ENCODE measurements at regions of chr1 and their contacts with region 1.

Region 1: GRCh38 chr1:165597883-165598675 is 33.0 kb upstream of the MGST3 start:
- DNase-seq: peak; percentile 99
- H3K4me3 Mint-ChIP-seq: peak overlapping the region; percentile 89
- H3K27ac Mint-ChIP-seq: peak overlapping the region; percentile 95
- H3K4me1 Mint-ChIP-seq: peaks cover 23% of the 10 kb centered on the region
- H3K27me3 Mint-ChIP-seq: peaks cover 27% of the 10 kb centered on the region
- CTCF ChIP-seq: no peak

Region 2: GRCh38 chr1:165144757-165145397 is 453.2 kb before region 1 on chr1:
- CTCF ChIA-PET with region 1: interaction called, 26 read pairs
- POLR2A ChIA-PET with region 1: no interaction called
- intact Hi-C with region 1: loop called (anchors 2 kb)
- DNase-seq: peak; percentile 81
- H3K4me3 Mint-ChIP-seq: no peak overlapping the region
- H3K27ac Mint-ChIP-seq: no peak overlapping the region
- H3K4me1 Mint-ChIP-seq: peaks cover 6% of the 10 kb centered on the region
- H3K27me3 Mint-ChIP-seq: peaks cover 52% of the 10 kb centered on the region
- CTCF ChIP-seq: peak; percentile 91

Region 3: GRCh38 chr1:165403835-165404482 is 194.1 kb before region 1 on chr1:
- CTCF ChIA-PET with region 1: interaction called, 557 read pairs
- POLR2A ChIA-PET with region 1: interaction called, 5 read pairs
- intact Hi-C with region 1: loop called (anchors 1 kb)
- DNase-seq: peak; percentile 65
- H3K4me3 Mint-ChIP-seq: no peak overlapping the region
- H3K27ac Mint-ChIP-seq: no peak overlapping the region
- H3K4me1 Mint-ChIP-seq: no peaks in the 10 kb centered on the region
- H3K27me3 Mint-ChIP-seq: peaks cover 13% of the 10 kb centered on the region
- CTCF ChIP-seq: peak; percentile 91

Region 4: DNA sequence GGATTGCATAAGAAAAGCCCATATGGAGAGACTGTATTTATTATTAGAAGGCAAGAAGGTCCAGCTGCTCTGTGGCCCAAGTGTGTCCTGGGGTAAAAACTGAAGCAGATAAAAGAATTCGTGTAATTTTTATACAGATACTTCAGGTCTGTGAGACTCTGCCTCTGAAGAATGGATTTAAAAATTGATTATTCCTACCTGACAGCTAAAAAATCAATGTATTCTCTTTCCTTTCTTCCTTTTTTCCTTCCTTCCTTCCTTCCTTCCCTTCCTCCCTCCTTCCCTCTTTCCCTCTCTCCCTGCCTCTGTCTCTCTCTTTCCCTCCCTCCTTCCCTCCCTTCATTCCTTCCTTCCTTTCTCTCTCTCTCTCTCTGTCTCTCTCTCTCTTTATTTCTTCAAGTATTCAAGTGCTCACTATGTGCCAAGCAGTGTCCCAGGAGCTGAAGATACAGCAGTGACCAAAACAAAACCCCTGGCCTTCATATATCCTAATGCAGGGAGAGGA is 21.6 kb after region 1 on chr1:
- CTCF ChIA-PET with region 1: interaction called, 21 read pairs
- POLR2A ChIA-PET with region 1: no interaction called
- intact Hi-C with region 1: no loop called
- DNase-seq: no peak
- H3K4me3 Mint-ChIP-seq: no peak overlapping the region
- H3K27ac Mint-ChIP-seq: no peak overlapping the region
- H3K4me1 Mint-ChIP-seq: no peaks in the 10 kb centered on the region
- H3K27me3 Mint-ChIP-seq: peaks cover 31% of the 10 kb centered on the region
- CTCF ChIP-seq: no peak

Region 5: DNA sequence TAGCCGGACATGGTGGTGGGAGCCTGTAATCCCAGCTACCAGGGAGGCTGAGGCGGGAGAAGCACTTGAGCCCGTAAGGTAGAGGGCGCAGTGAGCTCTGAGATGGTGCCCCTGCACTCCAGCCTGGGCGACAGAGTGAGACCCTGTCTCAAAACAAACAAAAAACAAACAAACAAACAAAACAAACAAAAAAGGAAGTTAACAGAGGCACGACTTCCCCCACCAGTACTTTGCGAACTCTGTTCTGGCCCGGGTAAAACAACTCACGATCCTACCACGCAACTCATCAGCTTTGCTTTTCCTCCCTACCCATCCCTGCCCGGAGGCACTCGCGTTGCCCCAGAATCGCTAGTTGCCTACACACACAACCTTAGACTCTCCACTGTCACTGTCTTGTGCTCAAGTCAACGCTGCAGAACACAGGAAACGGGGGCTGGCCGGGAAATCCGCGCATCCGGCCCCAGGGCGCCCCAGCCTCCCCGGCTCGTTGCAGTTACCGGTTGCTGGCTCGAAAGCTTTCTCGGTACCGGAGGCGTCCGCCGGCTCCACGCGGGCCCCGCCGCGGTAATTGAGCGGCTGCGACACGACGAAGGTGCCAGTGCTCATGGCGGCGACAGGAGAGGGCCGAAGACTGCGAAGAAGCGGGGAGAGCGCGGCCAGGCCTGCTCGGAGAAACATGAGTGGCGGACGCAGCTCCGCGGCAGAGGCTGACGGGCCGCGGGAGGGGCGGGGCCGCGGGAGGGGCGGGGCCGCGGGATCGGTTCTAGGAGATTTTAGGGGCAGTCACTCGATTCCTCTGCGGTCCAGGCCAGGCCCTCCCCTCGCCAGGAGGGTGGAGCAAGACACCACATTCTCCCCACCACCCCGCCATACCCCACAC is 100.0 kb after region 1 on chr1 and contains the start of gene ALDH9A1:
- CTCF ChIA-PET with region 1: interaction called, 62 read pairs
- POLR2A ChIA-PET with region 1: interaction called, 32 read pairs
- intact Hi-C with region 1: loop called (anchors 1 kb)
- DNase-seq: peak; percentile 90
- H3K4me3 Mint-ChIP-seq: peak within 1 kb of the TSS; percentile 97
- H3K27ac Mint-ChIP-seq: peak within 1 kb of the TSS; percentile 80
- H3K4me1 Mint-ChIP-seq: peaks cover 11% of the 10 kb centered on the region
- H3K27me3 Mint-ChIP-seq: no peaks in the 10 kb centered on the region
- CTCF ChIP-seq: peak; percentile 40
- total RNA-seq, gene ALDH9A1: 56.3 and 67.1 TPM in 2 replicates

Region 6: GRCh38 chr1:165827268-165828102 is 229.4 kb after region 1 on chr1 and contains the start of gene UCK2:
- CTCF ChIA-PET with region 1: interaction called, 19 read pairs
- POLR2A ChIA-PET with region 1: interaction called, 3 read pairs
- intact Hi-C with region 1: loop called (anchors 5 kb)
- DNase-seq: peak; percentile 86
- H3K4me3 Mint-ChIP-seq: peak within 1 kb of the TSS; percentile 96
- H3K27ac Mint-ChIP-seq: peak within 1 kb of the TSS; percentile 90
- H3K4me1 Mint-ChIP-seq: peaks cover 25% of the 10 kb centered on the region
- H3K27me3 Mint-ChIP-seq: no peaks in the 10 kb centered on the region
- CTCF ChIP-seq: peak; percentile 6
- total RNA-seq, gene UCK2: 108 and 144 TPM in 2 replicates

Region 7: DNA sequence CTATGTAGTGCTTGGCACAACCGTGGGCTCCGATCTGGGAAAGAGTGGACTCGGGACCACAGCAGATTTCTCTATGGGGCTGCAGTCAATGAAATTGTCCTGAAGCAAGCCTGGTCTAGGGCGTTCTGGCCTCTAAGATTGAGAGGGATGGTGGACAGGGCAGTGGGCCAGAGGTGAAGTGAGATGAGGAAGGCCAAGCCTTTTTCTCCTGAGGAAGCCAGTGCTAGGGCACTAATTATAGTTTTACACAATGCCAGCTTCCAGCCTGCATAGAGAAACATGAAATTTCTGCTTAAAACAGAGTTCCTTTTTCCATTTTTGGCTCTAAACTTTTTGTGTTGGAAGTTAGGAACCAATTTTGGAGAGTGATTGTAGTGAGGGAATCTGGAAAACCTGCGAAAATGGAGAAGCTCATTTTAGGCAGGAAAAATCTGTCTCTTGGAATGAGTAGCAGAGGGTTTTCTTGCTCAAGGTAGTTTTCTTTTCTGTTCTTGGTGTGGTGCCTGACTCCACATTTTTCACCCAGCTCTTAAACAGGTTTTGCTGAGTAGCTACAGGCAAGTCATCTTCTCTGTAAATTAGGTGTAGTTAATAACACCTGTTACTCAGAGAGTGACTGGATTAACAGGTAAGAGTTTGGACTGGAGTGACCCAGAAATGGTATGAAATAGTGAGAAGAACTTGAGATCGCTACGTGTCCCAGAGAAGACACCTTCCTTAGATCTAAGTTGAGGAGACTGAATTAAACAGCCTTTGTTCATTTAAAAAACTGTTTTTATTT is 251.5 kb after region 1 on chr1:
- CTCF ChIA-PET with region 1: no interaction called
- POLR2A ChIA-PET with region 1: no interaction called
- intact Hi-C with region 1: no loop called
- DNase-seq: no peak
- H3K4me3 Mint-ChIP-seq: no peak overlapping the region
- H3K27ac Mint-ChIP-seq: no peak overlapping the region
- H3K4me1 Mint-ChIP-seq: peaks cover 47% of the 10 kb centered on the region
- H3K27me3 Mint-ChIP-seq: no peaks in the 10 kb centered on the region
- CTCF ChIP-seq: no peak

Region 8: GRCh38 chr1:165949335-165950130 is 351.5 kb after region 1 on chr1:
- CTCF ChIA-PET with region 1: no interaction called
- POLR2A ChIA-PET with region 1: no interaction called
- intact Hi-C with region 1: no loop called
- DNase-seq: peak; percentile 52
- H3K4me3 Mint-ChIP-seq: no peak overlapping the region
- H3K27ac Mint-ChIP-seq: no peak overlapping the region
- H3K4me1 Mint-ChIP-seq: no peaks in the 10 kb centered on the region
- H3K27me3 Mint-ChIP-seq: peaks cover 18% of the 10 kb centered on the region
- CTCF ChIP-seq: no peak

Region 9: DNA sequence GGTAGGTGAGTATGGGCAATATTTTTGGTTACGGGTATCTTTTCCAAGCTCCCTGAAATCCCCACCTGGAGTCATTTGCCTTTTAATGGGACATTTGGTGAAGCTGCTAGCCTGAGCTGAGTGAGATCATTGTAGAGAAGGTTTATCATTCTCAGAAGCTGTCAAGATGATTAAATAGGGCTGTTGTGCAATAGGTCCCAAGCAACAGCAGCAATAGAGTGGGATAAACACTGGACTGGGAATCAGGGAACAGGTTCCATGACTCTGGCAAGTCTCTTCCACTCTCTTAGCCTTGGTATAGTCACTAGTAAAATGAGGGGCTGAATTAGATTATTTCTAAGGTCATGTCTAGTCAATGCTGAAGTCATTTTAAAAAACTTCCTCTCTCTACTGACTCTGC is 599.1 kb after region 1 on chr1:
- CTCF ChIA-PET with region 1: no interaction called
- POLR2A ChIA-PET with region 1: no interaction called
- intact Hi-C with region 1: no loop called
- DNase-seq: peak; percentile 60
- H3K4me3 Mint-ChIP-seq: no peak overlapping the region
- H3K27ac Mint-ChIP-seq: no peak overlapping the region
- H3K4me1 Mint-ChIP-seq: no peaks in the 10 kb centered on the region
- H3K27me3 Mint-ChIP-seq: peaks cover 9% of the 10 kb centered on the region
- CTCF ChIP-seq: no peak